A549 (cell line): ENCODE measurements at regions of chr15 and their contacts with region 1.

Region 1: GRCh38 chr15:70488002-70488605 is 275.3 kb downstream of the UACA start:
- DNase-seq: peak; percentile 80 to 88
- ATAC-seq: peak; percentile 45 to 67; a peak in 4 of 6 replicates
- H3K4me3 ChIP-seq: no peak overlapping the region
- H3K27ac ChIP-seq: peak overlapping the region; percentile 30 to 93; a peak in 4 of 6 replicates
- H3K4me1 ChIP-seq: peaks cover 32% of the 10 kb centered on the region
- CTCF ChIP-seq: peak; percentile 95
- EP300 ChIP-seq: no peak
- POLR2A ChIP-seq: no peak
- RAD21 ChIP-seq: peak; percentile 98 to 99

Region 2: DNA sequence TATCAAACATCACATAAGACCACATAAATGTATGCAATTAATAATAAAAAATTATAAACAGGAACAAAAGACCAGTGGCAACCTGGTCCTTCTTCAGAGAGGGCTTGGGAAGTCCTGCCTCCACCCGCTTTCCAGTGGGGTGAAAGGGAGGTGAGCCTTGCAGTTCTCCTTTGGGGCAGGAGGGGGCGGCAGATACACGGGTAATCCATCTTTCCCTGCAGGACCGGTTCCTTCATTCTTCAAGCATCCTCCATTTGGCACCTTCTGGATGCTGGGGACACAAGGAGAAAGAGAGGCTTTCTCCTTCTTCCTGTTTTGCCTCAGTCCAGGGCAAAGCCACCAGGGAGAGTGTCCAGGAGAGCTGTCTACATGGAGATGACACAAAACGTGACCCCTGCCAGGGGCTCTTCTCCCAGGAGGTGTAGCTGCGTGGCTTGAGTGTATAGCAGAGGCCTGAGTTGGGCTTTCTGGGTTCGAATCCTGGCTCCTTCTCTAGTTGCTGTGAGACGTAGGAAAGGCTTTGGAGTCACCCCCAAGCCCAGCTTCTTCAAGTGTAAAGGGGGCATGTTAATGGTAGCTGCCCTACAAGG is 1012.2 kb before region 1 on chr15:
- CTCF ChIA-PET with region 1: interaction called, 59 read pairs
- POLR2A ChIA-PET with region 1: no interaction called
- DNase-seq: peak; percentile 83 to 97
- ATAC-seq: peak; percentile 85 to 92
- H3K4me3 ChIP-seq: no peak overlapping the region
- H3K27ac ChIP-seq: no peak overlapping the region
- H3K4me1 ChIP-seq: no peaks in the 10 kb centered on the region
- CTCF ChIP-seq: peak; percentile 95
- EP300 ChIP-seq: no peak
- POLR2A ChIP-seq: no peak
- RAD21 ChIP-seq: peak; percentile 98 to 99

Region 3: DNA sequence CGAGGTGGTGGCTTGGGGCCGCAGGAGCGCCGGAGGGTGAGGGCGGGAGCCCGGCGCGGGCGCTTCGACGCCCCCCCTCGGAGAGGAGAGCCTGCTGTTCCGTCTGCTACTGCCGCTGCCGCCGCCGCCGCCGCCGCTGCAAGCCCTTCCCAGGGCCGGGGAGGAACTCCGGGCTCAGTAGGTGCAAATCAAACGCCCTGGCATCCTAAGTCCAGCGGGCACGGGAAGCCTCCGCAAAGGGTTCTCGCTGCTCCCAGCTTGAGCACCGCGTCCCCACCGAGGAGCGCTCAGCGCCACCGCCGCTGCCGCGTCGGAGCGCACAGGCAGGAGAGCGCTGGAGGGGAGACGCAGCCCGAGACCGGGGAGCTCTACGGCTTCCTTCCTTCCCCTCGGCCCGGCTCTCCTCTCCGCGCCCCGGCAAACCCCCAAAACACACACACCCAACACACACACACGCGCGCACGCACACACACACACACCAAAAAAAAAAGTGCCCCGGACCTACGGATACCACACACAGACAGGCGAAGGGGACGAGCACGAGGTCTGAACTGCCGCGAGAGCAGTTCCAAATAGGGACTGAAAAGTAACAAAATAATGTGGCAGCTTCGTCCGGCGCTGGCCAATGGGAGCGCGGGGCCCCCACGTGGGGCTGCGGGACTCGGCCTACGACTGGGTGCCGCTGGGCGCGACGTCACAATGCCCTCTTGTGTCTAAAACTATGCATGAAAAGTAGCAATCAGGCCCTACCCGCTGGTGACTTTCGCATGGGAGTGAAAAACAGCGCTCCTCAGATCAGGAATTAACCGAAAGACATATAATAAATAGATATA is 390.6 kb before region 1 on chr15 and contains the start of gene TLE3:
- CTCF ChIA-PET with region 1: interaction called, 35 read pairs
- POLR2A ChIA-PET with region 1: interaction called, 5 read pairs
- DNase-seq: peak; percentile 98 to 100
- ATAC-seq: peak; percentile 64 to 80
- H3K4me3 ChIP-seq: peak within 1 kb of the TSS; percentile 72
- H3K27ac ChIP-seq: peak within 1 kb of the TSS; percentile 87 to 91
- H3K4me1 ChIP-seq: peaks cover 46% of the 10 kb centered on the region
- CTCF ChIP-seq: peak; percentile 47
- EP300 ChIP-seq: no peak
- POLR2A ChIP-seq: peak; percentile 83
- RAD21 ChIP-seq: peak; percentile 61 to 77
- polyA plus RNA-seq, gene TLE3: 4.6 and 6.6 TPM in 2 replicates

Region 4: DNA sequence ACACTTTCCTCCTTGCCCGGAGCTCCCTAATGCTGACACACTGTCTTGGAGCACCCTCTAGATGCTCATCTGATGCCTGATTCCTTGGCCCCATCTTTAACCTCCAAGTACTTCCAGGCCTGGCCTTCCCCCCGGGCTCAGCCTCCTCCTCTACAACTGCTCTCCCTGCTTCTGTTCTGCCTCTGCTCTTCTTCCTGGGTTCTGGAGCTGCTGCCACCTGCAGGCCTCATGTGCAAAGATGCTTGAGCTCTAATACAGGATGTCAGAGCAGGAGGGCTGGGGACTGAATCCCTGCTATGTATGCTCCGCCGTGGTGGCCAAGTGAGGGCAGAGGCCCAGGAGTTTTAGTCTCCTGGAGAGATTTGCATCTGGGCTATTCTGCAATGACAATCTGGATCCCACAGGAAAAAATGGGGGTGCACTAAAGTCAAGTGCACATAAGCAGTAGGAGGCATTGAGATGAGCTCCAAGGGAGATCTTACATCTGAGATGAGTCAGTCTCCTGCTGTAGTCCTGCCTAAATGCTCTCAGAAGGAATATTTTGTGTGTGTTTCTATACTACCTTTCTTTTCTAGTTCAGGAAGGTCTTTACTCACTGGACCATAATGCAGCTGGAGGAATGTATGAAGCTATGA is 21.1 kb before region 1 on chr15:
- CTCF ChIA-PET with region 1: interaction called, 147 read pairs
- POLR2A ChIA-PET with region 1: no interaction called
- DNase-seq: peak; percentile 79 to 88
- ATAC-seq: peak; percentile 93 to 96
- H3K4me3 ChIP-seq: no peak overlapping the region
- H3K27ac ChIP-seq: 0 out of 6 replicates have a peak overlapping the region, but pooled peaks of 1 of the 2 experiments have one; percentile 7
- H3K4me1 ChIP-seq: peaks cover 13% of the 10 kb centered on the region; the same call in 2 of the 3 replicates
- CTCF ChIP-seq: peak; percentile 84
- EP300 ChIP-seq: no peak
- POLR2A ChIP-seq: no peak
- RAD21 ChIP-seq: peak; percentile 81 to 84

Region 5: DNA sequence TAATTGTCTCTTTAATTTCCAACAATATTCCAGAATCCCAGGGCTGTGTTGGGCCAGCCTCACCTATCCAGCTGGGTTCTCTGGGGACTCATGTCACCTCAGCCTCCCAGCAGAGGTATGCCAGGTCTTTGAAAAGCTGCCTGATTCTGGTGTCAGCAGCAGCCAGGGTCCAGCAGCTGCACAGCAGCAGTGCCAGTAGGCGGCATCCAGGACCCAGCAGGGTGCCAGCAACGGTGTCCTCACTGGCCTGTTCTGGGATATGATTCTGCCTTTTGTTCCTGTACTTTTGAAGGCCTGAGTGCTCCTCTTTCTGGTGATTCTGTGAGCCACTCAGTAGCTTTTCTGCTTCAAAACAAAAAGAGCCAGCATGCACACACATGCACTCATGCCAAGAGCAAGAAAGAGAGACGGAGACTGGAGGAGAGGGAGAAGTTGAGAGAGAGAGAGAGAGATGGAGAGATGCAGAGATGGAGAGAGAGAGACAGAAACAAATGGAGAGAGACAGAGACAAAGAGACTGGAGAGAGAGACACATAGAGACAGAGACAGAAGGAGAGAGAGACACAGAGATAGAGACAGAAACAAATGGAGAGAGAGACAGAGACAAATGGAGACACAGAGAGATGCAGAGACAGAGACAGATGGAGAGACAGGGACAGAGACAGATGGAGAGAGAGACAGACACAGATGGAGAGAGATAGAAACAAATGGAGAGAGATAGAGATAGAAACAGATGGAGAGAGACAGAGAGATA is 69.6 kb after region 1 on chr15:
- CTCF ChIA-PET with region 1: interaction called, 15 read pairs
- POLR2A ChIA-PET with region 1: no interaction called
- DNase-seq: no peak
- ATAC-seq: peak; percentile 44 to 64; a peak in 5 of 6 replicates
- H3K4me3 ChIP-seq: no peak overlapping the region
- H3K27ac ChIP-seq: no peak overlapping the region
- H3K4me1 ChIP-seq: no peaks in the 10 kb centered on the region
- CTCF ChIP-seq: no peak
- EP300 ChIP-seq: no peak
- POLR2A ChIP-seq: no peak
- RAD21 ChIP-seq: no peak

Region 6: GRCh38 chr15:70617076-70617910 is 129.2 kb after region 1 on chr15:
- CTCF ChIA-PET with region 1: no interaction called
- POLR2A ChIA-PET with region 1: no interaction called
- DNase-seq: peak in 1 of 2 experiments; percentile 29
- ATAC-seq: peak; percentile 62 to 72; a peak in 4 of 6 replicates
- H3K4me3 ChIP-seq: no peak overlapping the region
- H3K27ac ChIP-seq: peak overlapping the region in 1 of 2 experiments; percentile 16; a peak in 1 of 6 replicates
- H3K4me1 ChIP-seq: peaks cover 20% of the 10 kb centered on the region
- CTCF ChIP-seq: no peak
- EP300 ChIP-seq: no peak
- POLR2A ChIP-seq: no peak
- RAD21 ChIP-seq: no peak